Caco-2 (cell line): ENCODE measurements at regions of chr12 and their contacts with region 1.

Region 1: GRCh38 chr12:130849561-130850417 is 10.7 kb upstream of the STX2 start:
- DNase-seq: peak; percentile 85 to 88
- H3K4me3 ChIP-seq: no peak overlapping the region
- H3K4me3 Mint-ChIP-seq: peak overlapping the region; percentile 14
- H3K27ac Mint-ChIP-seq: peak overlapping the region; percentile 42
- H3K4me1 ChIP-seq: peaks cover 20% of the 10 kb centered on the region
- H3K4me1 Mint-ChIP-seq: peaks cover 13% of the 10 kb centered on the region
- H3K27me3 ChIP-seq: no peaks in the 10 kb centered on the region
- H3K27me3 Mint-ChIP-seq: no peaks in the 10 kb centered on the region
- CTCF ChIP-seq: no peak

Region 2: DNA sequence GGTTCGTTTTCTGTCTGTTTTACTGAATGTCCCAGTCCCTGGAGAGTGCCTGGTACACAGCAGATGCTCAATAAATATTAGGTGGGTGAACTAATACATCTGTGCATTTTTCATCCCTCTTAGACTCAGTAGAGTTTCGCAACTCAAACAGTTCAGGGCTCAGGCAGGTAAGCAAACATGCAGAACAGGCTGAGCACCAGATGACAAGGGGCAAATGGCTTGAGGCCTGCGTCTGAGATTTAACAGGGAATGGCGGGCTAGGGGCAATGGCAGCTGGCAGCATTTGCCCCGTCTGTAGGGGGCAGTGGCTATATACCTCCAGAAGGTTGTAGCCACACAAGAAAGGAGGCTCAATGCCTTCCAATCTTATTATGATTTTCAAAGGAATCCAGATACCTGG is 13.5 kb after region 1 on chr12:
- CTCF ChIA-PET with region 1: no interaction called
- POLR2A ChIA-PET with region 1: no interaction called
- intact Hi-C with region 1: loop called (anchors 1 kb)
- DNase-seq: peak; percentile 67 to 71
- H3K4me3 ChIP-seq: no peak overlapping the region
- H3K4me3 Mint-ChIP-seq: no peak overlapping the region
- H3K27ac Mint-ChIP-seq: no peak overlapping the region
- H3K4me1 ChIP-seq: peaks cover 19% of the 10 kb centered on the region
- H3K4me1 Mint-ChIP-seq: peaks cover 15% of the 10 kb centered on the region
- H3K27me3 ChIP-seq: no peaks in the 10 kb centered on the region
- H3K27me3 Mint-ChIP-seq: no peaks in the 10 kb centered on the region
- CTCF ChIP-seq: no peak